ENCODE measurements at regions of chr6 and their contacts with region 1.

Region 1: GRCh38 chr6:12637960-12638641 is 78.5 kb upstream of the PHACTR1 start:
- DNase-seq: peak; percentile 14 to 31
- ATAC-seq: peak in 5 of 8 donors; percentile 35 to 60 (median 56)
- H3K4me3 ChIP-seq: no peak overlapping the region
- H3K27ac ChIP-seq: no peak overlapping the region
- H3K4me1 ChIP-seq: peaks cover 0 to 4% (median 0%) of the 10 kb centered on the region in 9 donors
- H3K27me3 ChIP-seq: peaks cover 0 to 9% (median 0%) of the 10 kb centered on the region in 7 donors
- CTCF ChIP-seq: peak in 8 of 9 donors; percentile 20 to 77 (median 62)

Region 2: GRCh38 chr6:12483712-12484111 is 154.4 kb before region 1 on chr6:
- intact Hi-C with region 1: no loop called
- DNase-seq: no peak
- ATAC-seq: no peak
- H3K4me3 ChIP-seq: no peak overlapping the region
- H3K27ac ChIP-seq: no peak overlapping the region
- H3K4me1 ChIP-seq: peaks cover 0 to 5% (median 0%) of the 10 kb centered on the region in 9 donors
- H3K27me3 ChIP-seq: no peaks in the 10 kb centered on the region
- CTCF ChIP-seq: no peak

Region 3: DNA sequence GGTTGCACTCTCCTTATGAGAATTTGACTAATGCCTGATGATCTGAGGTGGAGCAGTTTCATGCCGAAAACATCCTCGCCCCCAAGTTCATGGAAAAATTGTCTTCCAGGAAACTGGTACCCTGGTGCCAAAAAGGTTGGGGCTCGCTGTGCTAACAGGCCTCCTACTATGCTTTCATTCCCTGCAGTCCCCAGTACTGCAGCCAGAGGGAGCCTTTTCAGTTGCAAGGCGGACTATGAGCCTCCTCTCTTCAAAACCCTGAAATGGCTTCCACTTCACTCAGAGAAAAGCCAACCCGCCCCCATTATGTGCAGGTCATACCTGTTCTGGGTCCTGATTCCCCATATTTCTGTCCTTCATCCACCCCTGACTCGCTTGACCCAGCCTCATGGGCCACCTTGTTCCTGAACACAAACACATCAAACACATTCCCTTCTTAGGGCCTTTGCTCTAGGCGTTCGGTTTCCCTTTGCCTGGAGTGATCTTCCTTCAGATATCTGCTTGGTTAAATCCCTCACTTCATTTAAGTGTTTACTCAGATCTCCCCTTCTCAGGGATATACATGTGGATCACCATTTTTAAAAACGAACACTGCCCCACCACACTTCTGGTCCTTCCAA is 252.2 kb after region 1 on chr6:
- intact Hi-C with region 1: loop called in 8 of 10 experiments (anchors 2 to 10 kb)
- DNase-seq: no peak
- ATAC-seq: no peak
- H3K4me3 ChIP-seq: no peak overlapping the region
- H3K27ac ChIP-seq: no peak overlapping the region
- H3K4me1 ChIP-seq: peaks cover 0 to 20% (median 7%) of the 10 kb centered on the region in 9 donors
- H3K27me3 ChIP-seq: no peaks in the 10 kb centered on the region
- CTCF ChIP-seq: peak in 7 of 9 donors; percentile 12 to 50 (median 34)

Region 4: DNA sequence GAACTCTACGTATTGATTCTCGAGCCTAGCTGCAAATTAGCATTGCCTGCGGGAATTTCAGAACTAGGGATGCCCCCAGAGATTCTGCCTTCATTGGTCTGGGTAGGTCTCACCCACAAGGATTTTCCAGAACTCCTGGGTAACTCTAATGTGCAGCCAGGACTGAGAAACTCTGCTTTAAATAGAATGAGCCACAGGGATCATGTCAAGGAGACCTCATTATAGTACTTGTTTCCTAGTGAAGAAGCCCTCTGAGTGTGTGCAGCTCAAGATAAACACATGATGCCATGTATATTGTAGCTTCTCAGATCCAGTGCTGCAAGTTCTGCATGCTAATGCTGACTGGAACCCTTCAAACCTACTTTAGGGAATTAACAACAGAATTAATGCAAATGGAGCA is 257.6 kb after region 1 on chr6:
- intact Hi-C with region 1: loop called in 8 of 10 experiments (anchors 2 to 10 kb)
- DNase-seq: no peak
- ATAC-seq: peak in 7 of 8 donors; percentile 33 to 75 (median 68)
- H3K4me3 ChIP-seq: no peak overlapping the region
- H3K27ac ChIP-seq: peak overlapping the region in 6 of 10 donors; percentile 18 to 66 (median 22)
- H3K4me1 ChIP-seq: peaks cover 0 to 24% (median 13%) of the 10 kb centered on the region in 9 donors
- H3K27me3 ChIP-seq: peaks cover 0 to 7% (median 0%) of the 10 kb centered on the region in 7 donors
- CTCF ChIP-seq: no peak